ENCODE measurements at regions of chr20 and their contacts with region 1.

Region 1: DNA sequence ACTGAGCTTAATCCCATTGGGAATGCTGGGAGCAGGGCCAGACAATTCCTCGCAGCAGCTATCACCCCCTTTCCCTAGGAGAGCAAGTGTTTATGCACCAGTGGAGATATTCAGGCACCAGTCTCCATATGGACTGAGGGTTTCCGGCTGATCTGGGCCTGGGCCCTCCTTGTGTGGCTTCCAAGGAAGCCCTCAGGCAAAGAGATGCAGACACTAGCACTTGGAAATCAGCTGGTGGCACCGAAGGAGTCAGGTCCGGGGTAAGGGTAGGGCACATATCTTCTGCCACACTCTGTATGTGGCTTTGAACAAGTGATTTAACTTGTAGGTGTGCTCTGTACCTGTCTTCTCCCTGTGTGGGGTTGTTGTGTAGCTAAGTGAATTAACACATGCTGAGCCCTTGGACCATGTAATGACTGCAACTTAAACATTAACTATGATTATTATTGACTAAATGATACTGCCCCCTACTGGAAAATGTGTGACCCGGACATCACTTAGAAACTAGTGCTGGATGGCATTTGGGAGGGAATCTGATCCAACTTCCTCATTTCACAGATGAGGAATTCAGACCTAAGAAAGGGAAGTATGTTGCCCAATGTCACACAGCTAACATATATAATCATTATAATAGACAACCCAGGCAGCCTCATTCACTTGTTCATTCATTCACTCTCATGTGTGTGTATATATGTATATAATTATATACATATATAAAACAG is 19.3 kb upstream of the WFDC2 start:
- DNase-seq: peak in 4 of 5 donors; percentile 36 to 47 (median 46)
- H3K4me3 ChIP-seq: no peak overlapping the region
- H3K4me3 Mint-ChIP-seq: no peak overlapping the region
- H3K27ac ChIP-seq: no peak overlapping the region
- H3K27ac Mint-ChIP-seq: no peak overlapping the region
- H3K4me1 ChIP-seq: no peaks in the 10 kb centered on the region
- H3K4me1 Mint-ChIP-seq: peaks cover 6 to 11% (median 8%) of the 10 kb centered on the region in 4 donors
- H3K27me3 ChIP-seq: no peaks in the 10 kb centered on the region
- H3K27me3 Mint-ChIP-seq: peaks cover 4 to 8% of the 10 kb centered on the region in 2 donors

Region 2: GRCh38 chr20:45322952-45323383 is 127.3 kb before region 1 on chr20:
- CTCF ChIA-PET with region 1: interaction called, 89 read pairs
- POLR2A ChIA-PET with region 1: interaction called, 3 read pairs
- intact Hi-C with region 1: loop called (anchors 1 kb)
- DNase-seq: no peak
- H3K4me3 ChIP-seq: no peak overlapping the region
- H3K4me3 Mint-ChIP-seq: no peak overlapping the region
- H3K27ac ChIP-seq: no peak overlapping the region
- H3K27ac Mint-ChIP-seq: no peak overlapping the region
- H3K4me1 ChIP-seq: peaks cover 29% of the 10 kb centered on the region
- H3K4me1 Mint-ChIP-seq: peaks cover 13 to 32% (median 22%) of the 10 kb centered on the region in 4 donors
- H3K27me3 ChIP-seq: no peaks in the 10 kb centered on the region
- H3K27me3 Mint-ChIP-seq: no peaks in the 10 kb centered on the region

Region 3: DNA sequence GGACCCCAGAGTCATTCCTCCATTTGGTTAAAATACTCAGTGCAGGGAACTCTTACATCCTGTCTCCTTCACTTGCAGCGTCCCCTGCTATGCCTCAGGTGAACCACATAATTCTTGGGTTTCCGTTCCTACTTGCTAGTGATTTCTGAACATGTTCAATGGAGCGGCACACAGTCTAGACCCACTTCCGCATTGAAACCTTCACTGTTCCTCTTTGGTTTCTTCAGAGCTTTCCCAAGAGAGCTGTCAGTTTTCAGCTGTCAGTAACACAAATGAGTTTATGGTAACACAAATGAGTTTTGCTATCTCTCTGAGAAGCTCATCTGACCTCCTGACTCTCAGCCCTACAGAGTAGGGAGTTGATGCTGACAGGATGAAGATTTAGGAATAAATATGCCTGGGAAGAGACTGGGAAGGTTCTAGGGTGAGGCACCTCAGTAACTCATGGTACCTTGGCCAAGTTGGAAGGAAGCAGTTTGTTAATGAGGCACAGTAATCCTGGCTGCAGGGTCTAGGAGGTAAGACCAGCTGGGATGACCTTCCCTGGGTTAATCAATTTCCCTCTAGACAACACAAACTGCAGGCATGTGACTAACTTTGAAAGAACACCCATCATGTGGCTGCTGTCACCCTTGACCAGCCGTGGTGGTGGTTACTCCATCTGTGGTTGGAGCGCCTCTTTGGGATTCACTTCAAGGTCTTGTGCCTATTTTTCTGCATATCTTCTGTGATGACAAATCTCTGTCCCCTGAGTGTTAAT is 81.9 kb before region 1 on chr20:
- CTCF ChIA-PET with region 1: interaction called, 19 read pairs
- POLR2A ChIA-PET with region 1: interaction called, 14 read pairs
- intact Hi-C with region 1: loop called (anchors 1 kb)
- DNase-seq: peak; percentile 51 to 64 (median 54)
- H3K4me3 ChIP-seq: peak overlapping the region in 1 of 2 donors; percentile 6
- H3K4me3 Mint-ChIP-seq: peak overlapping the region; percentile 14 to 76 (median 64)
- H3K27ac ChIP-seq: peak overlapping the region; percentile 36
- H3K27ac Mint-ChIP-seq: peak overlapping the region; percentile 80 to 94 (median 87)
- H3K4me1 ChIP-seq: peaks cover 61% of the 10 kb centered on the region
- H3K4me1 Mint-ChIP-seq: peaks cover 37 to 80% (median 68%) of the 10 kb centered on the region in 4 donors
- H3K27me3 ChIP-seq: no peaks in the 10 kb centered on the region
- H3K27me3 Mint-ChIP-seq: no peaks in the 10 kb centered on the region

Region 4: DNA sequence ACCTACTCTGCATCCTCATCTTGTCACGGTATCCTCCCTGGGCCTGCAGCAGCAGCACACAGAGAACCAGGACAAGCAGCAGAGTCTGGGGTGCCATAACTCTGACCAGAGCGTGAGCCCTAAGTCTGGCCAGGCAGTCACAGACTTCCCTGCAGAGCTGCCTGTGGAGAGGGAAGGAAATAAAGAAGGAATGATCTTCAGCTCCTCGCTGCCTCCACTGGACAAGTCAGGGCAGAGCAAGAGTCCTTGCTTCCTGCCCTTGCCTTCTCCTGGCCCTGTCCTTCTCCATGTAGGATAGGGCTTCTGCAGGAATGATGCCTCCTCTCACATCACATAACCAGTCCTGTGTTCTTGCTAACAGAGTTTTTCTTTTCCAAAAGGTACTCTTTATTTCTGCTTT is 235.6 kb after region 1 on chr20:
- CTCF ChIA-PET with region 1: no interaction called
- POLR2A ChIA-PET with region 1: no interaction called
- intact Hi-C with region 1: no loop called
- DNase-seq: no peak
- H3K4me3 ChIP-seq: no peak overlapping the region
- H3K4me3 Mint-ChIP-seq: no peak overlapping the region
- H3K27ac ChIP-seq: no peak overlapping the region
- H3K27ac Mint-ChIP-seq: no peak overlapping the region
- H3K4me1 ChIP-seq: no peaks in the 10 kb centered on the region
- H3K4me1 Mint-ChIP-seq: no peaks in the 10 kb centered on the region
- H3K27me3 ChIP-seq: no peaks in the 10 kb centered on the region
- H3K27me3 Mint-ChIP-seq: peaks cover 13 to 33% of the 10 kb centered on the region in 2 donors

Measured in CD4-positive, alpha-beta memory T cell (primary cell).